MCF 10A (cell line): ENCODE measurements at regions of chr1 and their contacts with region 1.

Region 1: GRCh38 chr1:44002606-44003157 is 11.3 kb downstream of the CCDC24 start:
- DNase-seq: no peak
- H3K4me3 Mint-ChIP-seq: no peak overlapping the region
- H3K27ac Mint-ChIP-seq: no peak overlapping the region
- H3K4me1 Mint-ChIP-seq: no peaks in the 10 kb centered on the region
- H3K27me3 Mint-ChIP-seq: no peaks in the 10 kb centered on the region
- CTCF ChIP-seq: peak; percentile 32

Region 2: GRCh38 chr1:43991476-43992231 is 11.0 kb before region 1 on chr1 and contains the start of gene CCDC24:
- CTCF ChIA-PET with region 1: interaction called, 36 read pairs
- POLR2A ChIA-PET with region 1: no interaction called
- intact Hi-C with region 1: no loop called
- DNase-seq: peak; percentile 86
- H3K4me3 Mint-ChIP-seq: peak within 1 kb of the TSS; percentile 89
- H3K27ac Mint-ChIP-seq: peak within 1 kb of the TSS; percentile 92
- H3K4me1 Mint-ChIP-seq: no peaks in the 10 kb centered on the region
- H3K27me3 Mint-ChIP-seq: no peaks in the 10 kb centered on the region
- CTCF ChIP-seq: no peak
- total RNA-seq, gene CCDC24: 3.6 and 4.8 TPM in 2 replicates

Region 3: GRCh38 chr1:44021581-44022321 is 19.1 kb after region 1 on chr1:
- CTCF ChIA-PET with region 1: interaction called, 218 read pairs
- POLR2A ChIA-PET with region 1: interaction called, 3 read pairs
- intact Hi-C with region 1: no loop called
- DNase-seq: no peak
- H3K4me3 Mint-ChIP-seq: no peak overlapping the region
- H3K27ac Mint-ChIP-seq: no peak overlapping the region
- H3K4me1 Mint-ChIP-seq: peaks cover 7% of the 10 kb centered on the region
- H3K27me3 Mint-ChIP-seq: no peaks in the 10 kb centered on the region
- CTCF ChIP-seq: no peak

Region 4: DNA sequence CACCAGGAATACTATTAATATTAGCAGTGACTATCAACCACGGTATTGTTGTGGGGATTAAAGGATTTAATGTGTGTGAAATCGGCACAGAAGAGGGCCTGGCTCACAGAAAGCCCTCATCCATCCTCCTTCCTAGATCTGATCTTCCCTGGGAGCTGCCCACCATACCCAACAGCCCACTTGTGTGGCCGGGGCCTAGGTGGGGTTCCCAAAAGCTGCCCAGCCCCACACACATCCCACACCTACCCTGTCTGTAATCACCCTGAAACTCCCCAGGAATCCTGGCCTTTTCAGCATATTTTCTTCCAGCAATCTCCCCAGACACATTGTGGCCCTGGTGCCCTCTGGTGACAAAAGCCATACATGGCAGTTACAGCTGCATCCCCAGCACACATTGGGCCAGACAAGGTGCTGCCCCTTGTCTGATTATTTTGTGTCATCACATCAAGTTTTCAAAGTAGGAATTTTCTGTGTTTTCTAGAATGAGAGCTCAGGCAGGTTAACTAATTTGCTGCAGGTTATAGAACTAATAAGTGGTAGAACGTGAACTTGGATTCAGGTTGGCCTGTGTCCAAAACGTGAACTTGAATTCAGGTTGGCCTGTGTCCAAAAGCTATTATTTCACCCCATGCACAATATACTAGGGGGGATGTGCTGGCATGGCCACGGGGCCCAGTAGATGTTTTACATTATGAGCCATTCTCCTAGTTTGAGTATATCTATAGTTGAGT is 33.9 kb after region 1 on chr1:
- CTCF ChIA-PET with region 1: interaction called, 218 read pairs
- POLR2A ChIA-PET with region 1: interaction called, 16 read pairs
- intact Hi-C with region 1: loop called (anchors 1 kb)
- DNase-seq: peak; percentile 85
- H3K4me3 Mint-ChIP-seq: no peak overlapping the region
- H3K27ac Mint-ChIP-seq: no peak overlapping the region
- H3K4me1 Mint-ChIP-seq: peaks cover 11% of the 10 kb centered on the region
- H3K27me3 Mint-ChIP-seq: no peaks in the 10 kb centered on the region
- CTCF ChIP-seq: peak; percentile 73